ENCODE measurements at regions of chrX and their contacts with region 1.

Region 1: GRCh38 chrX:110418316-110419235 is 59.9 kb downstream of the RTL9 start:
- DNase-seq: no peak
- ATAC-seq: peak; percentile 38; the same call in 1 of the 3 replicates
- H3K4me3 ChIP-seq: no peak overlapping the region
- H3K27ac ChIP-seq: no peak overlapping the region
- H3K4me1 ChIP-seq: peaks cover 5% of the 10 kb centered on the region
- H3K27me3 ChIP-seq: no peaks in the 10 kb centered on the region
- CTCF ChIP-seq: peak in 2 of 3 experiments; percentile 20 to 37; a peak in 3 of 6 replicates
- EP300 ChIP-seq: no peak
- POLR2A ChIP-seq: no peak
- RAD21 ChIP-seq: peak; percentile 43; the same call in 1 of the 2 replicates

Region 2: DNA sequence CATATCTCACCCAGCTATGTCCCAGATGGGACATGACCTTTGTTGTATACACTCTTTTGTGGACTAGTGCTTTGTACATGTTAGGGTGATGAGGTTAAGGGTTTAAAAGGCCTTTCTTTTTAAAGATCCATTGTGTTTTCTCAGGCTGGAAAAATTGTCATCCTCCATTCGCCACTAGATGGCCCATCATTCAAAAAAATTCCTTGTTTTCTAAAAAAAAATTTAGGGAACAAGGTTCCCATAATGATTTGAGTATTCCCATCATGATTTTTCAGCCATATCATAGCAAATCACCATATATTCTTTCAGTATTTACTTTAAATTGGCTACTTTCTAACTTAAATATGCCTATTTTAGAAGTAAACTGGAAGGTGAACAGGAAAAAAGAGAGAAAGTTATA is 507.5 kb before region 1 on chrX:
- CTCF ChIA-PET with region 1: no interaction called
- POLR2A ChIA-PET with region 1: no interaction called
- RAD21 ChIA-PET with region 1: no interaction called
- SMC1A ChIA-PET with region 1: no interaction called
- in situ Hi-C with region 1: no loop called
- intact Hi-C with region 1: loop called (anchors 5 kb)
- DNase-seq: no peak
- ATAC-seq: no peak
- H3K4me3 ChIP-seq: no peak overlapping the region
- H3K27ac ChIP-seq: no peak overlapping the region
- H3K4me1 ChIP-seq: no peaks in the 10 kb centered on the region
- H3K27me3 ChIP-seq: no peaks in the 10 kb centered on the region
- CTCF ChIP-seq: peak; percentile 26 to 39 (median 37); a peak in 5 of 6 replicates
- EP300 ChIP-seq: no peak
- POLR2A ChIP-seq: no peak
- RAD21 ChIP-seq: peak; percentile 30; the same call in 1 of the 2 replicates

Region 3: GRCh38 chrX:110346681-110347080 is 71.9 kb before region 1 on chrX:
- CTCF ChIA-PET with region 1: no interaction called
- POLR2A ChIA-PET with region 1: no interaction called
- RAD21 ChIA-PET with region 1: no interaction called
- SMC1A ChIA-PET with region 1: no interaction called
- in situ Hi-C with region 1: no loop called
- intact Hi-C with region 1: no loop called
- DNase-seq: no peak
- ATAC-seq: no peak
- H3K4me3 ChIP-seq: no peak overlapping the region
- H3K27ac ChIP-seq: no peak overlapping the region
- H3K4me1 ChIP-seq: no peaks in the 10 kb centered on the region
- H3K27me3 ChIP-seq: no peaks in the 10 kb centered on the region
- CTCF ChIP-seq: no peak
- EP300 ChIP-seq: no peak
- POLR2A ChIP-seq: no peak
- RAD21 ChIP-seq: no peak

Region 4: DNA sequence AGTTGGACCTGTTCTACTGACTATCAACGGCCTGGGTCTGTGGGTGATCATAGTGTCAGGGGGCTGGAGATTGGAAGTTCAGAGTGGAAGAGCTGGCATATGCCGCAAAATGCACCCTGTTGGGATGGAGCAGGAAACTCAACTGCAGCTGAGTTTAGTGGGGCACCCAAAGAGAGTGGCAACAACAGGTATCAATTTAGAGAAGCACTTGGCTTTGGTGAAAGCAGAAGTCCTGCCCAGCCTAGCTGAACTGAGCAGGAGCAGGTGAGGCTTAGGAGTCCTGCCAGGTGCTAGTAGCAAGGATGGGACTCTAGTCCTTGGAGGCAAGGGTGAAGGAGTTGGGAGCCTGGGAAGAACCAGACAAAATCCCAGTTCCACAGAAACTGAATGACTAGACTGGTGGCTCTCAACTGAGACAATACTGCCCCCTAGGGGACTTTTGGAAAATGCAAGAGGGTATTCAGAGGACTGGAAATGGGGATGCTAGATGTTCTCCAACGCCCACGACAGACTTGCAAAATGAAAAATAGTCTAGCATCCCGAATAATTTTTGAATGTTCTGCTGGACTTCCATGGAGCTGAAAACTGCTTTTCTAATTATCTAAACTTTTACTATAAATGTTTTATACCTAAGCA is 10.5 kb before region 1 on chrX:
- CTCF ChIA-PET with region 1: interaction called, 37 read pairs
- POLR2A ChIA-PET with region 1: no interaction called
- RAD21 ChIA-PET with region 1: interaction called, 4 read pairs
- SMC1A ChIA-PET with region 1: interaction called, 7 read pairs
- in situ Hi-C with region 1: no loop called
- intact Hi-C with region 1: no loop called
- DNase-seq: no peak
- ATAC-seq: peak; percentile 82
- H3K4me3 ChIP-seq: no peak overlapping the region
- H3K27ac ChIP-seq: no peak overlapping the region
- H3K4me1 ChIP-seq: no peaks in the 10 kb centered on the region
- H3K27me3 ChIP-seq: no peaks in the 10 kb centered on the region
- CTCF ChIP-seq: peak; percentile 60 to 73 (median 68); a peak in 5 of 6 replicates
- EP300 ChIP-seq: no peak
- POLR2A ChIP-seq: no peak
- RAD21 ChIP-seq: peak; percentile 90